Caco-2 (cell line): ENCODE measurements at regions of chr15 and their contacts with region 1.

Region 1: DNA sequence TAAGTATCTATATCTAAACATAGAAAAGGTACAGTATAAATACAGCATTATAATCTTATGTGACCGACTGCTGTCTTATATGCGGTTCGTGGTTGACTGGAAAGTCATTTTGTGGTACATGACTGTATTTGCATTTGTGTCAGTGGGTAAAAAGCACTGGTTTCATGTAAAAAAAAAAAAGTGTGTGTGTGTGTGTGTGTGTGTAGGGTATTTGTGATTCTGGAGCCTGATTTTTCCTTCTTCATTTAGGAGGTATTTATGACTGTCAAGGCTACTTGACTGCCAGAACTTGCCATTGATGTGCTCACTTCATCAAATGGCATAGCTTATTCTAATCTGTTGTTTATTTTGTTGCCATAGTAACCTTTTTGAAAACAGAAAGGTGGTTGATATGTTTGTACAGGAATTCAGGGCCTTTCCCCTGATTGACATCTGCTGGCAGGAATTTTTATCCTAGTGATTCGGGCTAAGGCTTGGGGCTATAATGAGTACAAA is 63.2 kb downstream of the AKAP13 start:
- DNase-seq: peak; percentile 68 to 77
- H3K4me3 ChIP-seq: no peak overlapping the region
- H3K4me3 Mint-ChIP-seq: peak overlapping the region; percentile 32
- H3K27ac Mint-ChIP-seq: peak overlapping the region; percentile 88
- H3K4me1 ChIP-seq: peaks cover 28% of the 10 kb centered on the region
- H3K4me1 Mint-ChIP-seq: peaks cover 36% of the 10 kb centered on the region
- H3K27me3 ChIP-seq: no peaks in the 10 kb centered on the region
- H3K27me3 Mint-ChIP-seq: no peaks in the 10 kb centered on the region
- CTCF ChIP-seq: peak in 1 of 2 experiments; percentile 47

Region 2: GRCh38 chr15:85337425-85338074 is 106.1 kb before region 1 on chr15:
- CTCF ChIA-PET with region 1: interaction called, 3 read pairs
- POLR2A ChIA-PET with region 1: no interaction called
- intact Hi-C with region 1: loop called (anchors 5 kb)
- DNase-seq: no peak
- H3K4me3 ChIP-seq: no peak overlapping the region
- H3K4me3 Mint-ChIP-seq: no peak overlapping the region
- H3K27ac Mint-ChIP-seq: no peak overlapping the region
- H3K4me1 ChIP-seq: peaks cover 38% of the 10 kb centered on the region
- H3K4me1 Mint-ChIP-seq: peaks cover 15% of the 10 kb centered on the region
- H3K27me3 ChIP-seq: no peaks in the 10 kb centered on the region
- H3K27me3 Mint-ChIP-seq: no peaks in the 10 kb centered on the region
- CTCF ChIP-seq: no peak